BJ (cell line): ENCODE measurements at regions of chr1 and their contacts with region 1.

Region 1: GRCh38 chr1:10074059-10074851 is 41.5 kb downstream of the UBE4B start:
- DNase-seq: peak; percentile 91
- H3K4me3 ChIP-seq: no peak overlapping the region
- H3K27me3 ChIP-seq: no peaks in the 10 kb centered on the region
- CTCF ChIP-seq: no peak

Region 2: GRCh38 chr1:9890224-9890731 is 184.0 kb before region 1 on chr1:
- CTCF ChIA-PET with region 1: no interaction called
- POLR2A ChIA-PET with region 1: interaction called, 20 read pairs
- DNase-seq: peak; percentile 61
- H3K4me3 ChIP-seq: no peak overlapping the region
- H3K27me3 ChIP-seq: no peaks in the 10 kb centered on the region
- CTCF ChIP-seq: no peak